Activated CD8-positive, alpha-beta memory T cell treated with anti-CD3 and anti-CD28 coated beads, Interleukin-2, amount 10 ng/mL, durations not matched to agents 7 days and 5 days (primary cell): ENCODE measurements at regions of chr19 and their contacts with region 1.

Region 1: GRCh38 chr19:14117668-14118164 is at the start of gene PRKACA:
- DNase-seq: peak; percentile 99
- ATAC-seq: peak; percentile 96
- H3K4me3 Mint-ChIP-seq: peak within 1 kb of the TSS; percentile 77
- H3K27ac Mint-ChIP-seq: peak within 1 kb of the TSS; percentile 66
- H3K4me1 Mint-ChIP-seq: peaks cover 42% of the 10 kb centered on the region
- H3K27me3 Mint-ChIP-seq: no peaks in the 10 kb centered on the region
- total RNA-seq, gene PRKACA: 42.3 to 65.4 TPM

Region 2: GRCh38 chr19:14081325-14082093 is 36.2 kb before region 1 on chr19:
- CTCF ChIA-PET with region 1: interaction called, 12 read pairs
- DNase-seq: peak; percentile 100
- ATAC-seq: peak; percentile 97
- H3K4me3 Mint-ChIP-seq: peak overlapping the region; percentile 92
- H3K27ac Mint-ChIP-seq: peak overlapping the region; percentile 92
- H3K4me1 Mint-ChIP-seq: peaks cover 16% of the 10 kb centered on the region
- H3K27me3 Mint-ChIP-seq: no peaks in the 10 kb centered on the region

Region 3: GRCh38 chr19:14103310-14103709 is 14.4 kb before region 1 on chr19:
- CTCF ChIA-PET with region 1: interaction called, 16 read pairs
- DNase-seq: no peak
- ATAC-seq: peak; percentile 27
- H3K4me3 Mint-ChIP-seq: no peak overlapping the region
- H3K27ac Mint-ChIP-seq: no peak overlapping the region
- H3K4me1 Mint-ChIP-seq: no peaks in the 10 kb centered on the region
- H3K27me3 Mint-ChIP-seq: no peaks in the 10 kb centered on the region

Region 4: GRCh38 chr19:14248578-14249011 is 130.9 kb after region 1 on chr19:
- CTCF ChIA-PET with region 1: no interaction called
- DNase-seq: peak; percentile 44
- ATAC-seq: peak; percentile 64
- H3K4me3 Mint-ChIP-seq: no peak overlapping the region
- H3K27ac Mint-ChIP-seq: peak overlapping the region; percentile 52
- H3K4me1 Mint-ChIP-seq: peaks cover 5% of the 10 kb centered on the region
- H3K27me3 Mint-ChIP-seq: peaks cover 9% of the 10 kb centered on the region